Tibial artery (tissue), 4 donors: ENCODE measurements at regions of chr1 and their contacts with region 1.

Region 1: GRCh38 chr1:203369666-203370065 is 18.7 kb upstream of the FMOD start:
- DNase-seq: no peak
- H3K4me3 ChIP-seq: no peak overlapping the region
- H3K27ac ChIP-seq: peak overlapping the region in 1 of 2 donors; percentile 15
- H3K4me1 ChIP-seq: peaks cover 0 to 23% (median 17%) of the 10 kb centered on the region in 4 donors
- H3K27me3 ChIP-seq: no peaks in the 10 kb centered on the region
- CTCF ChIP-seq: no peak

Region 2: DNA sequence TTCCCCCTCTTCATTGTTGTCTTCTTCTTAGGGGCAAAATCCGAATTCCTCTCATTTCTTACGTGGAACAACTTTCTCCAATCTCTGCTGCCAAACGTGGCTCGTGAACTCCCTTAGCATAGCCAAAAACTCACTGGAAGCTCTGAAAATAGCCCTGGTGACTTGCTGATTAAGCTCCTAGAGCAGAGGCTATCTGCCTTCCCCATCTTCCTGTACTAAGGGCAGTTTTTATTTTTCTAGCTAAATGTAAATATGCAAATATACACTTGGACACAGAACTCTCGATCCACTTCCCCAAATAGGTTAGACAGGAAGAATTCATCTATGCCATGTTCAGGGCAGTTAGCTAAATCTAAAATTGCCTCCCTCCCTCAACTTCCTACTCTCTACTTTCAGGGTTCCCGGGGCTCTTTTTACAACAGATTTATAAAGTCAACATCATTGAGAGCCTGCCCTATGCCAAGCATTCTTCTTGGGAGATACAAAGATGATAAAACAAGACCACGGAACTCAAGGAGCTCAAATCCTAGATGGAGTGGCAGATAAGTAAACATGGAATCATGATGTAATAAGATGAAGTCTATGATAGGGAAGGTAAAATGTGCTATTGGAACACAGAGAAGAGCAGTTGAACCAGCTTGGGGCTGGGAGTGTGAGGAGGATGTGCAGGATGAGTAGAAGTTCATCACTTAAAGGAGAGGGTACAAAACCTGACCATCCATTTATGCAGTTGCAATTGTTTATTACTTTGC is 40.7 kb after region 1 on chr1:
- intact Hi-C with region 1: no loop called
- DNase-seq: peak; percentile 48 to 76
- H3K4me3 ChIP-seq: no peak overlapping the region
- H3K27ac ChIP-seq: peak overlapping the region; percentile 81 to 91
- H3K4me1 ChIP-seq: peaks cover 11 to 60% (median 52%) of the 10 kb centered on the region in 4 donors
- H3K27me3 ChIP-seq: no peaks in the 10 kb centered on the region
- CTCF ChIP-seq: no peak

Region 3: DNA sequence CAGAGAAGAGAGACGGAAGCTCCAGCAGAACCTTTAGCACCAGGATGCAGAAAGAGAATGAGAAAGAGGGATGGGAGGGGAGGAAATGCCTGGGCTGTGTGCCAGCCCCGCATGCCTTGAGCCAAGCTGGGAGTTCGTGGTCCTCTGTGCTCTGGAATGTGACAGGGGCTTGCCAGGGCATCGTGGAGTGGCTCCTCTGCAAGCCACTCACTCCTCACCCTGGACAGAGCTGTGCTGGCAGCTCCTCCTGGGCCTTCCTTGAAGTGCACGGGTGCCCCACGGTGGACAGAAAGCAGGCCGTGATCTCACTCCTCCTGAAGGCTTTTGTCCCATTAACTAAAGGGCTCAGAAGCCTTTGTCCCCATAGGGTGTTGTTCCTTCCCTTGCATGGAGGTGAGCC is 71.1 kb after region 1 on chr1:
- intact Hi-C with region 1: loop called (anchors 1 kb)
- DNase-seq: peak; percentile 91 to 92
- H3K4me3 ChIP-seq: no peak overlapping the region
- H3K27ac ChIP-seq: peak overlapping the region; percentile 81 to 85
- H3K4me1 ChIP-seq: peaks cover 0 to 40% (median 26%) of the 10 kb centered on the region in 4 donors
- H3K27me3 ChIP-seq: no peaks in the 10 kb centered on the region
- CTCF ChIP-seq: peak; percentile 83 to 88